ENCODE measurements at regions of chr11 and their contacts with region 1.

Region 1: DNA sequence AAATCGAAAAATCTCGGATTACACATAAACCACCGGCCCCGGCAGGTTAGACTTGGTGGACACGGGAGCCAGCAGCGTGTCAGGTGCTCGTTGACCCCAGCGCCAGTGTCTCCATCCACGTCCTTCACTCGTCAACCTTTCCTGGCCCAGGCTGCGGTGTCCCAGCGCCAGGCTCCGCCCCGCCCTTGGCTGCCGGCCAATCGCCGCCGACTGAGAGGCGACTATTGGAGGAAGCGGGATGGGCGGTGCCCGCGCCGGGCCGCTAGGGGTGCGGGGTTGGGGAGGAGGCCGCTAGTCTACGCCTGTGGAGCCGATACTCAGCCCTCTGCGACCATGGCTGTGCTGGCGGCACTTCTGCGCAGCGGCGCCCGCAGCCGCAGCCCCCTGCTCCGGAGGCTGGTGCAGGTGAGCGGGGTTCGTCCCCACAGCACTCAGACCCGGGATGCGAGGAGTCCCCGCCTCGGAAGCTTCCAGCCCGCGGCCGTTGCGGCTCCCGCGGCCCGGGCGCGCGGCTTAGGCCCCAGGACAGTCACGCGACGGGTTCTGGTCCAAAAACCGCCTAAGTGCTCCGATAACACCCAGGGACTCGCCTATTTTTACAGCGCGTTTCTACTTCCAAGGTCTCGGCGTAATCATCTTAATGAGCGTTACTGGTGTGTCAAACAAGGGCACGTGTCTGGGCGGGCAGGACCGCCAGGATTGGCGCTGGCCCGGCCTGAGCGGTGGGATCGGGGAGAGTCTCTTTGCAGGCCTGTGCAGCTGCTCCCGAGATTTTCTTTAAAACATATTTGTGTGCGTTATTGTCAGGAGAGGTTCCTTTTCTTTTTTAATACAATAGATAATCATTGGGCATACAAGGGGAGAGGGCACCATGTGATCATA is at the start of gene ACAT1:
- DNase-seq: peak; percentile 90 to 99
- H3K4me3 ChIP-seq: peak within 1 kb of the TSS; percentile 68
- H3K4me1 ChIP-seq: peaks cover 10% of the 10 kb centered on the region
- H3K27me3 ChIP-seq: no peaks in the 10 kb centered on the region

Region 2: DNA sequence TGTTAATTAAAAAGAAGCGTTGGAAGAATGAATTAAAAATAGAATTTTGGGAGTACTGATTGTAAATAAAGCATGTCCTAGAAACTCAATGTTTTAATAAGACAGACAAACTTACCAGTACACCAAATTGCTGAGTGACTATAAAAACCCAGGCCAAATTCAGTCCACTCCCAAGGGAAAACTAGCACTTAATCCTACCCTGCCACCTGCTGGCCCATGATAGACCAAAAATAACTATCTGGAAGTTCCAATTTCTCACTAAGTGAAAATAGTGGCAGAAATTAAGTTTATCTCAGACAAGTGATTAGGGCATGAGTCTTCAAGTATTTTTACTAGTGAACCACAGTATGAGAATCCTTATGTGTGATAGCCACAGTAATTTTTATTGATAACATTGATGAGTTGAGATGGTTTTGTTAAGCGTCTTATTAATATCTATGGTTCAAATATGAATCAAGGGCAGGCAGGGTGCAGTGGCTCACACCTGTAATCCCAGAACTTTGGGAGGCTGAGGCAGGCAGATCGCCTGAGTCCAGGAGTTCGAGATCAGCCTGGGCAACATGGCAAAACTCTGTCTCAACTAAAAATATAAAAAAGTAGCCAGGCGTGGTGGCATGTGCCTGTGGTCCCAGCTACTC is 533.6 kb after region 1 on chr11:
- in situ Hi-C with region 1: loop called (anchors 10 kb)
- DNase-seq: peak; percentile 67 to 69
- H3K4me3 ChIP-seq: no peak overlapping the region
- H3K4me1 ChIP-seq: no peaks in the 10 kb centered on the region
- H3K27me3 ChIP-seq: peaks cover 6% of the 10 kb centered on the region; the same call in 1 of the 2 replicates